Endothelial cell of umbilical vein (primary cell): ENCODE measurements at regions of chr20 and their contacts with region 1.

Region 1: GRCh38 chr20:25390538-25391528 is at the start of gene ABHD12:
- DNase-seq: peak; percentile 96
- H3K4me3 ChIP-seq: peak within 1 kb of the TSS; percentile 79 to 81 (median 80)
- H3K27ac ChIP-seq: peak within 1 kb of the TSS; percentile 76
- H3K4me1 ChIP-seq: peaks cover 9% of the 10 kb centered on the region
- H3K27me3 ChIP-seq: peaks cover 0 to 1% of the 10 kb centered on the region in 2 experiments
- CTCF ChIP-seq: no peak
- POLR2A ChIP-seq: peak; percentile 93
- total RNA-seq, gene ABHD12: 36.0 and 39.6 TPM in 2 replicates

Region 2: GRCh38 chr20:25057234-25058050 is 333.4 kb before region 1 on chr20:
- CTCF ChIA-PET with region 1: no interaction called
- POLR2A ChIA-PET with region 1: no interaction called
- dilution Hi-C with region 1: no loop called
- intact Hi-C with region 1: loop called (anchors 5 kb)
- DNase-seq: peak; percentile 51
- H3K4me3 ChIP-seq: peak overlapping the region; percentile 1 to 50 (median 48)
- H3K27ac ChIP-seq: no peak overlapping the region
- H3K4me1 ChIP-seq: peaks cover 7% of the 10 kb centered on the region
- H3K27me3 ChIP-seq: peaks cover 13 to 19% of the 10 kb centered on the region in 2 experiments
- CTCF ChIP-seq: no peak
- POLR2A ChIP-seq: no peak

Region 3: DNA sequence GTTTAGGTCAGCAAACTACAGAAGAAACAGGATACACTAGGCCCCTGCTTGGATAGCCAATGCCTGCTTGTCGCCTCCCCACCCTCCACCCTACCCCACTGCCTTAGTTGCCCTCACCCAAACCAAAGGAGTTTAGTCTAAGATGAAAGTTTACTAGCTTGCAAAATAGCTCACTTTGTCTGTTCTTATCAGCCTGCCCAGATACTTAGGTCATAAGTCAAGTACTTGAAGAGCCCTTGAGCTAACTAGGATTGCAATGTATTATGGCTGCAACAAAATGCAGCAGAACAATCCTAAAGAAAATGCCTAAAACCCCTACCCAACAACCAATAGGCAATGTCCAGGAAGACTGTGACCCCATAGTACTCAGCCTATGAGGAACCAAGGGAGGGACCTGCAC is 202.6 kb before region 1 on chr20:
- CTCF ChIA-PET with region 1: no interaction called
- POLR2A ChIA-PET with region 1: no interaction called
- dilution Hi-C with region 1: no loop called
- intact Hi-C with region 1: no loop called
- DNase-seq: no peak
- H3K4me3 ChIP-seq: no peak overlapping the region
- H3K27ac ChIP-seq: no peak overlapping the region
- H3K4me1 ChIP-seq: no peaks in the 10 kb centered on the region
- H3K27me3 ChIP-seq: peaks cover 23 to 35% of the 10 kb centered on the region in 2 experiments
- CTCF ChIP-seq: no peak
- POLR2A ChIP-seq: no peak

Region 4: GRCh38 chr20:25247956-25248785 is 142.7 kb before region 1 on chr20 and contains the start of gene PYGB:
- CTCF ChIA-PET with region 1: no interaction called
- POLR2A ChIA-PET with region 1: no interaction called
- dilution Hi-C with region 1: no loop called
- intact Hi-C with region 1: loop called (anchors 1 kb)
- DNase-seq: peak; percentile 88
- H3K4me3 ChIP-seq: peak within 1 kb of the TSS; percentile 71 to 84 (median 77)
- H3K27ac ChIP-seq: peak within 1 kb of the TSS; percentile 59
- H3K4me1 ChIP-seq: peaks cover 11% of the 10 kb centered on the region
- H3K27me3 ChIP-seq: no peaks in the 10 kb centered on the region
- CTCF ChIP-seq: no peak
- POLR2A ChIP-seq: peak; percentile 94
- total RNA-seq, gene PYGB: 57.2 and 60.2 TPM in 2 replicates

Region 5: DNA sequence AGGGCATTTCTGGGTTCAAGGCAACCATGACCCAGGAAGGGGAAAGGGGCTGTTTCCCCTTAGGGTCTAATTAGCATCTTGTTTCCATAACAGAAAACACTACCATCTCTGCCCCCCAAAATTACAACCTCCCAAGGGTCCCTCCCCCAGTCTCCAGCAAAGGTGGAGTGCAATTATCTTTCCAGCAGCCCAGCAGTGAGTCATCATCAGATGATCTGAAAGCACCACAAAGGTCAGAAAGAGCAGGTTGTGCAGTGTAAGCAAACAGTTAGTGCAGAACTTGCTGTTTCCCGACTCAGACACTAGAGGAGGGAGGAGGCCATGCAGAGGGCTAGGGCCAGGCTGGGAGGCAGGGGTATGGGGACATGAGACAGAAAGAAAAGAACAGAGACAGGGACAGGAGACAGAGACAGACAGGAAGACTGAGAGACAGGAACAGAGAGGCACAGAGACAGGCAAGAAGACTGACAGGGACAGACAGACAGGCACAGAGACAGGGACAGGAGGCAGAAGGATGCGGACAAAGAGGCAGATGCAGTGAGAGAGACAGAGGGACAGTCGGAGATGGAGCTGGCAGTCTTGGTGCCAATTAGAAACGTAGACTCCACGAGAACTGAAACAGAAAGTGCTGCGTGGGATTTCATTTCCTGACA is 80.4 kb before region 1 on chr20:
- CTCF ChIA-PET with region 1: no interaction called
- POLR2A ChIA-PET with region 1: no interaction called
- dilution Hi-C with region 1: no loop called
- intact Hi-C with region 1: loop called (anchors 2 kb)
- DNase-seq: peak; percentile 68
- H3K4me3 ChIP-seq: no peak overlapping the region
- H3K27ac ChIP-seq: peak overlapping the region; percentile 21
- H3K4me1 ChIP-seq: peaks cover 16% of the 10 kb centered on the region
- H3K27me3 ChIP-seq: no peaks in the 10 kb centered on the region
- CTCF ChIP-seq: peak; percentile 38 to 44
- POLR2A ChIP-seq: no peak

Region 6: DNA sequence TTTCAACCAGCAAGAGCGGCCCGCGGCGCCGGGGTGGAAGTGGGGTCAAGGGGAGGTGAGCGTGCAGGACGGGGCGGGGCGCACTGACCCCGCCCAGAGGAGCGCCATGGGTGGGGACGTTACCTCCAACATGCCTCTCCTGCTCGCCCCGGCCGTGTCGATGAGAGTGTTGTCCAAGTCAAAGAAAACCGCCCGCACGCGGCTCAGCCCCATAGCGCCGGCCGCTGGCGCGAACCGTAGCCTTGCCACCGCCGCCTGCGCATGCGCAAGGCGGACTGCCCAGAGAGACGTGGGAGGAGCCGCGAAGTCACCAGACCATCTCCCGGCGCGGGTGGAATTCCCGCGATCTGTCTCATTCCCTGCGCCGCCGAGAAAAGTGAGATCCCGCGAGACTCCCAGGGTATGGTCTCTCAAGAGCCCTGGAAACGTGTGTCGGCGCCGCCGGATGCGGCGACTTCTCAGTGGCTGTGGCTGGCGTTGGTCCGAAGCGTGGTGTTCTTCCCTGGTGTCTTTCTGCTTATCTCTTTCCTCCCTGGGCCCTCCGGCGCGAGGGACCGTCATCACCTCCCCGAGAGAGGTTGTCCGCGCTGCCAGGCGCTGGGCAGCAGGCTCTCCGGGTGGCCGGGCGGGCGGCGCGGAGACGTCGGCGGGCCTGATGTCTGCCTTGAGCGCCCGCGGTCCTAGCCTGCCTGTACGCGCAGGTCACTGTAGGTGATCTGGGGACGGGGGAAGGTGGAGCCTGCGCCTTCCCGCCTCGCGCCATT is 233.1 kb after region 1 on chr20 and contains the start of gene NANP:
- CTCF ChIA-PET with region 1: no interaction called
- POLR2A ChIA-PET with region 1: interaction called, 3 read pairs
- dilution Hi-C with region 1: no loop called
- intact Hi-C with region 1: loop called (anchors 5 kb)
- DNase-seq: peak; percentile 99
- H3K4me3 ChIP-seq: peak within 1 kb of the TSS; percentile 55 to 85 (median 82)
- H3K27ac ChIP-seq: peak within 1 kb of the TSS; percentile 91
- H3K4me1 ChIP-seq: peaks cover 11% of the 10 kb centered on the region
- H3K27me3 ChIP-seq: no peaks in the 10 kb centered on the region
- CTCF ChIP-seq: no peak
- POLR2A ChIP-seq: peak; percentile 97
- total RNA-seq, gene NANP: 7.5 and 8.0 TPM in 2 replicates